MCF 10A (cell line): ENCODE measurements at regions of chr10 and their contacts with region 1.

Region 1: GRCh38 chr10:987870-988666 is at the start of gene GTPBP4:
- DNase-seq: peak; percentile 95
- H3K4me3 Mint-ChIP-seq: peak within 1 kb of the TSS; percentile 95
- H3K27ac Mint-ChIP-seq: peak within 1 kb of the TSS; percentile 96
- H3K4me1 Mint-ChIP-seq: peaks cover 20% of the 10 kb centered on the region
- H3K27me3 Mint-ChIP-seq: no peaks in the 10 kb centered on the region
- CTCF ChIP-seq: no peak
- total RNA-seq, gene GTPBP4: 138 and 142 TPM in 2 replicates

Region 2: GRCh38 chr10:931416-932318 is 56.4 kb before region 1 on chr10 and contains the start of gene LARP4B:
- CTCF ChIA-PET with region 1: interaction called, 3 read pairs
- POLR2A ChIA-PET with region 1: interaction called, 114 read pairs
- intact Hi-C with region 1: loop called (anchors 2 kb)
- DNase-seq: peak; percentile 96
- H3K4me3 Mint-ChIP-seq: peak within 1 kb of the TSS; percentile 87
- H3K27ac Mint-ChIP-seq: peak within 1 kb of the TSS; percentile 92
- H3K4me1 Mint-ChIP-seq: peaks cover 24% of the 10 kb centered on the region
- H3K27me3 Mint-ChIP-seq: no peaks in the 10 kb centered on the region
- CTCF ChIP-seq: no peak
- total RNA-seq, gene LARP4B: 127 and 131 TPM in 2 replicates

Region 3: DNA sequence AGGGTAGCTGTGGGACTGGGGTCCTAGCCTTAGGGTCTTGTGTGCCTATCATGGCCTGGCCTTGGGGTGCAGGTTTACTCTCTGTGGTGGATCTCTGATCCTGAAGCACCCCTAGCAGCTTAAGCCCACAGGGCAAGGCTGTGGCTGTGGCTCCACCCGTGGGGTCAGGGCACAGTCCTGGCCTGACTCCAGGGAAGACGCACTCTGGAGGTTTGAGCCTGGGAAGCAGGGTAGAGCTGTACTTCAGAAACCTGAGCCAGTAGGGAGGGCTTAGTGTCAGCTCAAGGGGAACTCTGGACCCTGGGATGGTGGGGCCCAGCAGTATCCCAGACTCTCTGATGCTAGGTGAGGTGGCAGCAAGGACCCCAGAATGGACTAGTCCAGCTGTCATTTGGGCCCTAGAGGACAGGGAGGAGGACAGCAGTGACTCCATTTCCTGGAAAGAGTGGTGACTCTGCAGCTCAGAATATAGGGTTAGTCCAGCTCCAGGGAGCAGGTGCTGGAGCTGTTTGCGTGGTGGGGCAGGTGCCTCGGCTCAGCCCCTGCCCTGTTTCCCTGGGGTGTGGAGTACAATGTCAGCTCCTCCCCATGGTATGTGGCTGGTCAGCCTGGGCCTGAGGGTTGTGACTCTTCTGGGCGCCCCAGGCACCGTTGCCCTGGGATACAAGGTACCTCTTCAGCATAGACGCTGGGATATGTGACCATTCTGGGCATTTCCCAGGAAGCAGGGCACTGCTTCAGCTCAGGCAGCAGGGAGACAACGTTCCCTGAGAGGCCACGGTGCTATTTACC is 16.0 kb after region 1 on chr10:
- CTCF ChIA-PET with region 1: interaction called, 3 read pairs
- POLR2A ChIA-PET with region 1: interaction called, 13 read pairs
- intact Hi-C with region 1: no loop called
- DNase-seq: no peak
- H3K4me3 Mint-ChIP-seq: no peak overlapping the region
- H3K27ac Mint-ChIP-seq: no peak overlapping the region
- H3K4me1 Mint-ChIP-seq: no peaks in the 10 kb centered on the region
- H3K27me3 Mint-ChIP-seq: no peaks in the 10 kb centered on the region
- CTCF ChIP-seq: no peak

Region 4: GRCh38 chr10:1036341-1036791 is 48.3 kb after region 1 on chr10:
- CTCF ChIA-PET with region 1: interaction called, 3 read pairs
- POLR2A ChIA-PET with region 1: interaction called, 32 read pairs
- intact Hi-C with region 1: no loop called
- DNase-seq: peak; percentile 90
- H3K4me3 Mint-ChIP-seq: peak overlapping the region; percentile 28
- H3K27ac Mint-ChIP-seq: peak overlapping the region; percentile 89
- H3K4me1 Mint-ChIP-seq: peaks cover 19% of the 10 kb centered on the region
- H3K27me3 Mint-ChIP-seq: no peaks in the 10 kb centered on the region
- CTCF ChIP-seq: no peak

Region 5: DNA sequence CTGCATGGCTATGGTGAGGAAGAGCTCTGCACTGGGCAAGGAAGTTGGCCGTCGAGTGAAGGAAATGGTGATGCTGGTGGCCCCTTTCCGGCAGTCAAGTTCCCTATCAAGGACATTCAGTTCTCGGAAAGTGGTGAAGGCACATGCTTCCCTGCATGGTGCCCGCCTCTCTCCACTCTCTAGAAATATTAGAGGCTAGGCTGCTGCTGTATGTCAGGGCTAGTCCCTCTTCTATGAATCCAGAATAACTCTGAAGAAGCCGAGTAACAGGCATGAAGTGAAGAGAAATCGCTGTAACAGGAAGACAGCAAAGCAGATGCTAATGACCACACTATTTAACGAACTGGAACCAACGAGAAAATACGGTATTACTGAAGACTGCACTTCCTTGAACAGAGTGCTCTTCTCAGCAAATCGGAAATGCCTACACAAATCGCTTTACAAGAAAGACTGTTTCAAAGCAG is 55.5 kb after region 1 on chr10:
- CTCF ChIA-PET with region 1: no interaction called
- POLR2A ChIA-PET with region 1: interaction called, 170 read pairs
- intact Hi-C with region 1: no loop called
- DNase-seq: no peak
- H3K4me3 Mint-ChIP-seq: no peak overlapping the region
- H3K27ac Mint-ChIP-seq: no peak overlapping the region
- H3K4me1 Mint-ChIP-seq: peaks cover 29% of the 10 kb centered on the region
- H3K27me3 Mint-ChIP-seq: no peaks in the 10 kb centered on the region
- CTCF ChIP-seq: no peak

Region 6: DNA sequence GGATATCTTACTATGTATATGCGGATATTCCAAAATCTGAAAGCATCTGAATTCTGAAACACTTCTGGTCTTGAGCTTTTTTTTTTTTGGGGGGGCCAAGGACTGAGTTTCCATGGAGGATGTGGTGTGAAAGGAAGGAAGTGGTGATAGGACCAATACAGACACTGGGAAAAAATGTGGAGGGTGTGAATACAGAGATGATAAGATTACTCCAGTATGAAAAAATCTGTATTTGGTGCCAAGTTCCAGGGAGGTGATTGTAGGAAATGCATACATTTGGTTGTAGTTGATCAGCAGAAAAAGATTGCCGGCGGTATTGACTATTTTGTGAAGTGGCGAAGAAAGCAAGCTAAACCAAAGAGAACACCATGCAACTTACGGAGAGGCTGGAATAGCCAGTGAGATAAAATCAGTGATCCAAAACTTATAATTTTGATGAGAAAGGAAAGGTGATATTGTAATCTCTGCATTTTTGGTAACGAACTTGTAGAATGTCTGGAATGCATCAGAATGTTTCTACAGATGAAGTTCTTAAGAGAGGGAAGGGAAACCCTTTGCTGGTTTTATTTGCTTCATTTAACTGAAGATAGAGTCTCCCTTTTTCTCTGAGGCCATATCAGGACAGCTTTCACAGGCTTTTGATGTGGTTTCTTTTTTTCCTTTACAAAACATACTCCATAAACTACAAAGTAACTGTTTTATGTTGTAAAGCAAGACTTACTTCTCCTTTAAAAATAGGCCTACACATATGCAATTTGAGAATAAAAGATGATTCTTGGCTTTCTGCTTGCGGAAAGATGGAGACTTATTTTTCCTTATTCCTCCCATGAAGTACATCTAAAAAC is 74.1 kb after region 1 on chr10:
- CTCF ChIA-PET with region 1: interaction called, 5 read pairs
- POLR2A ChIA-PET with region 1: interaction called, 15 read pairs
- intact Hi-C with region 1: no loop called
- DNase-seq: no peak
- H3K4me3 Mint-ChIP-seq: no peak overlapping the region
- H3K27ac Mint-ChIP-seq: no peak overlapping the region
- H3K4me1 Mint-ChIP-seq: peaks cover 18% of the 10 kb centered on the region
- H3K27me3 Mint-ChIP-seq: no peaks in the 10 kb centered on the region
- CTCF ChIP-seq: no peak

Region 7: DNA sequence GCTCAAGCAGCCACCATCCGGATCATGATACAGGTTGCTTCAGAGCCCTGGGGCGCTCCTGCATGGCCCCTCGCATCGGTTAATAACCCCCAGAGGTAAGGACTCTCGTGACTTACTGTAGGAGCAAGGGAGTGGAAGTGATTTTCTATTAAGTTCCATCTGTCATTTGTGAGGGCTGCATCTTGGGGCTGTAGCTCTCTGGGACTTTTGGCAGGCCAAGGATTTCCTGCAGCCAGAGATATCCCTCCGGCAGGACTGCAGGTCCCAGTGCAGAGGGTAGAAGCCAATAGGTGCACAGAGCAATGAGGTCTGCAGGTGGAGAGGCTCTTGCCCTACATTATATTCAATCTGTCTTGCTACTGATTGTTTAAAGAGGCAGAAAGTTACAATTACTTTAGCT is 1106.1 kb after region 1 on chr10:
- CTCF ChIA-PET with region 1: no interaction called
- POLR2A ChIA-PET with region 1: no interaction called
- intact Hi-C with region 1: no loop called
- DNase-seq: no peak
- H3K4me3 Mint-ChIP-seq: no peak overlapping the region
- H3K27ac Mint-ChIP-seq: no peak overlapping the region
- H3K4me1 Mint-ChIP-seq: no peaks in the 10 kb centered on the region
- H3K27me3 Mint-ChIP-seq: no peaks in the 10 kb centered on the region
- CTCF ChIP-seq: no peak